PC-9 (cell line): ENCODE measurements at regions of chr2 and their contacts with region 1.

Region 1: DNA sequence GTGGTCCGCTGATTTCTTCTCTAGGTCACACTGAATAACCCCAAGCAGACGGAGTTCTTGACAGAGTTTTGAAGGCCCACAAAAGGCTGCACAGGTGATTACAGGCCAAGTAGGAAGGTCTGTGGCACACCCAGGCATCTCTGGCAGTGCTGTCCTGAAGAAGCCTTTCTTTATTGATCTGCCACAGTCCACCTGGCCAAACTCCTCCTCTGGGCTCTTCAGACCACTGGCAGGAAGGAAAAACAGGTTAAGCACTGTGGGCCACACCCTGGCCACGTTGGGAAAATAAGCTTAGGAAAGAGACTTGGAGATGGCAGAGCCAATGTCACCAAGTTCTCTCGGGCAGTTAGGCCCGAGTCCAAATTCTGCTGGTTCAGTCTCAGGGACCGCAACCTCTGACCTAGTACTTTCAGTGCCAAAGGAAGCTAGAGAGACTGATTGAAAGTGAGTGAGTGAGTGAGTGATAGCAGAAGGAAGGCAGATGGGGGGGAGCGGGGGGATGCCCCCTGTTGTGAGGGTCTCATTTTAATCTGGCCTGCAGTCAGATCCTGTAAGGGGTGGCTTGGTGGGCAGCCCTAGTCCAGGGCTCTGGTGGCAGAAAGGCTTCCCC is 102.9 kb downstream of the TGFA start:
- DNase-seq: no peak
- H3K4me3 ChIP-seq: no peak overlapping the region
- H3K27ac ChIP-seq: no peak overlapping the region
- H3K4me1 ChIP-seq: peaks cover 5% of the 10 kb centered on the region
- H3K27me3 ChIP-seq: no peaks in the 10 kb centered on the region
- CTCF ChIP-seq: no peak

Region 2: DNA sequence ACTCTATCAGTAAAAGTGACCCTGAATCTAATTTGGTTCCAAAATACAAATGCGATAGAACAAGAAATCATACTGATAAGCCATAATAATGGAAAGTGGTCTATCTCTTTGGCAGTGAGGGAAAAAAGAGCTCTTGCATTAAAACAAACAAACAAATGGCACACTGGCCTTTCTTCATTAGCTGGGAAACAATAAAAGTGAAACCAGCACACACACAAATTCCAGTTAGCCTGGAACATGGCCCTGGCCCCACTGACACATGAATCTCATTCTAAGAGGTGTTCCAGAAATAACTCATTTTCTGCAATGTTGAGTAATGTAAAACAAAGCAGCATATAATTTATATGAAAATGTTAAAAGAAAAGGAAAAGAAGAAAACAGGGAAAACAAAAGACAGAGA is 182.2 kb after region 1 on chr2:
- CTCF ChIA-PET with region 1: no interaction called
- POLR2A ChIA-PET with region 1: interaction called, 13 read pairs
- intact Hi-C with region 1: no loop called
- DNase-seq: no peak
- H3K4me3 ChIP-seq: no peak overlapping the region
- H3K27ac ChIP-seq: no peak overlapping the region
- H3K4me1 ChIP-seq: no peaks in the 10 kb centered on the region
- H3K27me3 ChIP-seq: no peaks in the 10 kb centered on the region
- CTCF ChIP-seq: no peak